Astrocyte of the cerebellum (primary cell): ENCODE measurements at regions of chr10 and their contacts with region 1.

Region 1: DNA sequence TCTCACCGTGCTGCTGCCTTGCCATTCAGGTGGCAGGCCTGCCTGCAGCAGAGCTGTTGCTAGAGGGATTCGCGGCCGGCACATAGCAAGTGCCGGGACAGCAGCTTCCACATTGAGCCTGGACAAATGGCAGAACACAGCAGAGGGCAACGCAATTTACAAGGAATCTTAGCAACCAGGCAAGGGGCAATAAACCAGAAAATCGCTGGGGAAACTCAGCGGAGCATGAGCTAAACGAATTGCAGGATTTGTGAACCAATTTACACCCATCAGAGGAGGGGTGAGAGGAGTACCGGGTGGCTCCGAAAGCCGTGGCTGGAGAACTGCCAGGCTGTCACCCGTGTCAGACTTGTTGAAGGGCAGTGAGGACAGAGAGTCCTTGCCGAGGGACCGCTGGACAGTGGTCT is 58.6 kb upstream of the LOXL4 start:
- DNase-seq: no peak
- H3K4me3 ChIP-seq: no peak overlapping the region
- CTCF ChIP-seq: no peak

Region 2: DNA sequence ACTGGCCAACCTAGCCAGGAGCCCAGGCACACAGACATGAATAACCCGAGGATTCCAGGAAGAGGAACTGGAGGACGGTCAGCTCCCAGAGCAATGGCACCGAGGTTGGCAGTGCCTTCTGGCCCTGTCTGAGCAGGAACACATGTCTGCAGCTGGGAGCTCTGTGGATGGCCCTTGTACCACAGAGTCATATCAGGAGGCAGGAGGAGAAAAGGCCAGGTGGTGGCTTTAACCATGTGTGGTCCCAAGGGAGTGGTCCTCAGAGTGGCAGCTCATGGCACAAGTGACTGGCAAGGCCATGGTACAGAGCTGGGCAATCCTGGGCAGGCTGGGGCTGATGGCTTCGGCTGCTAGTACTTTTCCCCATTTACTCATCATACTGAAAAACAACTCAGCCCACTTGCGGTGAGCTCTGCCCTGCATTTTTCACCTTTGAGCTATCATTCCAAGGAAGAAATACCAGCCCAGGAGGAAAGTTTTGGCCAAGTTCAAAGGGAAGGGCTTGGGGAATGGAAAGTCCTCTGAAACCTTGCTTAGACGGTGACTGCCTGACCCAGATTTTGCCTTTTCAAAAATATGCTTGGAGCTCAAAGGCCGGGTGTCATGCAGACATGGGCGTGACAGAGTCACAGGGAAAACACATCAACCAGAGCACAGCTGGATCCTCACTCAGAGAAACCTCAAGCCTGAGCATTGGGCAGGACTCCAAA is 32.9 kb before region 1 on chr10:
- in situ Hi-C with region 1: loop called (anchors 5 kb)
- DNase-seq: no peak
- H3K4me3 ChIP-seq: no peak overlapping the region
- CTCF ChIP-seq: no peak